Activated CD4-positive, alpha-beta memory T cell treated with anti-CD3 and anti-CD28 coated beads for 36 hours (primary cell): ENCODE measurements at regions of chr10 and their contacts with region 1.

Region 1: GRCh38 chr10:102583435-102584417 is 60.6 kb upstream of the TRIM8 start:
- DNase-seq: peak; percentile 90
- H3K4me3 Mint-ChIP-seq: no peak overlapping the region
- H3K27ac Mint-ChIP-seq: no peak overlapping the region
- H3K4me1 Mint-ChIP-seq: peaks cover 13% of the 10 kb centered on the region
- H3K27me3 Mint-ChIP-seq: no peaks in the 10 kb centered on the region

Region 2: DNA sequence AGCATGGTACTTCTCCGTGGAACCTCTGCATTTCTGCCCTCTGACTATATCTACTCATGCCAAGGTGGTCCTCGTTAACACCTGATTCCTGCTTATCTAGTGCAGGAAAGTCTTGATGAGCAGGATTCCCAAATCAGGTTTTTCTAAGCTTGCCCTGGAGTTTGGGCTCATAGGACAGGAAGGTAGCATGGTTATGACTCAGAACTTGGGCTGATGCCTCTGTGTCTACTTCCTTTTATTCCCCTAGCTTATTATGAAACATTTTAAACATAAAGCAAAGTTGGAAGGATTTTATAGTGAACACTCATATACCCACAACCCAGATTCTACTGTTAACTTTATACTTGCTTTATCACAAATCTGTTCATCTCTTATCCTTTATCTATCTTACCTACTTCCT is 74.3 kb before region 1 on chr10:
- CTCF ChIA-PET with region 1: interaction called, 139 read pairs
- POLR2A ChIA-PET with region 1: interaction called, 10 read pairs
- intact Hi-C with region 1: no loop called
- DNase-seq: no peak
- H3K4me3 Mint-ChIP-seq: no peak overlapping the region
- H3K27ac Mint-ChIP-seq: no peak overlapping the region
- H3K4me1 Mint-ChIP-seq: peaks cover 27% of the 10 kb centered on the region
- H3K27me3 Mint-ChIP-seq: no peaks in the 10 kb centered on the region

Region 3: GRCh38 chr10:102534333-102534732 is 49.4 kb before region 1 on chr10:
- CTCF ChIA-PET with region 1: no interaction called
- POLR2A ChIA-PET with region 1: no interaction called
- intact Hi-C with region 1: no loop called
- DNase-seq: no peak
- H3K4me3 Mint-ChIP-seq: no peak overlapping the region
- H3K27ac Mint-ChIP-seq: no peak overlapping the region
- H3K4me1 Mint-ChIP-seq: peaks cover 5% of the 10 kb centered on the region
- H3K27me3 Mint-ChIP-seq: no peaks in the 10 kb centered on the region

Region 4: DNA sequence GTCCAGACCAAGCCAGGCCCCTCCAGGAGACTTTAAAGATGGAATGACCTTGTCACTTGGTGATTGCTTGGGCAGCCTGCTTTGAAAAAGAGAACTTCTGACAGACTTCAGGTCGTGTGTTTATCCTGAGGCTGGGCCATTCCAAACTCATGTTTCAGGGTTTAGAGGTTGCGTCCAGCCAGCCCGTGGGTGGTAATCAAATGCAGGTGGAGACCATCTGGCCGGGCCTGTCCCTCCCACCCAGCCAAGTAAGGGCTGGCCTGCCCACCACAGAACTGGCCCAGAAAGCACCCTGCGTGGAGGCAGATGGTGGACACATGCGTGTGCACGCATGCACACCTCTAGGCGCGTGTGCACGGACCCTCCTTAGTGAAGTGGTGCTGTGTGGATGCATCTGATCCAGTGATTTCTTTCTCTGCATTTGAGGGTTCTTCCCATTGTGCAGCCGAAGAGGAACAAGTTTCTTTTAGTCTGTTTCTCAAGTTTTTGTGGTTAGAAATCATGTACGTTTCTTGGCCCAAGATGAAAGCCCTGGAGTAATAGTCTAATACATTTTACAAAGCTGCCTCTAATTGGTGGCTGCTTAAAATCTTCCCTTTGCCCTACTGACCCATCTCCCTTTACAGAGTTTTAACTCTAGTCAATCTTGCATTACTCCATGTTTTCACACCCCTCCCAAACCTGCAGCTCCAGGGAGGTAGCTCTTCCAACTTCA is 37.0 kb before region 1 on chr10:
- CTCF ChIA-PET with region 1: interaction called, 14 read pairs
- POLR2A ChIA-PET with region 1: no interaction called
- intact Hi-C with region 1: no loop called
- DNase-seq: no peak
- H3K4me3 Mint-ChIP-seq: no peak overlapping the region
- H3K27ac Mint-ChIP-seq: no peak overlapping the region
- H3K4me1 Mint-ChIP-seq: peaks cover 7% of the 10 kb centered on the region
- H3K27me3 Mint-ChIP-seq: no peaks in the 10 kb centered on the region

Region 5: GRCh38 chr10:102565793-102566192 is 17.9 kb before region 1 on chr10:
- CTCF ChIA-PET with region 1: interaction called, 13 read pairs
- POLR2A ChIA-PET with region 1: no interaction called
- intact Hi-C with region 1: no loop called
- DNase-seq: no peak
- H3K4me3 Mint-ChIP-seq: no peak overlapping the region
- H3K27ac Mint-ChIP-seq: no peak overlapping the region
- H3K4me1 Mint-ChIP-seq: peaks cover 7% of the 10 kb centered on the region
- H3K27me3 Mint-ChIP-seq: no peaks in the 10 kb centered on the region

Region 6: GRCh38 chr10:102599565-102600327 is 16.0 kb after region 1 on chr10:
- CTCF ChIA-PET with region 1: interaction called, 15 read pairs
- POLR2A ChIA-PET with region 1: no interaction called
- intact Hi-C with region 1: no loop called
- DNase-seq: no peak
- H3K4me3 Mint-ChIP-seq: no peak overlapping the region
- H3K27ac Mint-ChIP-seq: no peak overlapping the region
- H3K4me1 Mint-ChIP-seq: peaks cover 7% of the 10 kb centered on the region
- H3K27me3 Mint-ChIP-seq: no peaks in the 10 kb centered on the region

Region 7: GRCh38 chr10:103021897-103022286 is 438.2 kb after region 1 on chr10:
- CTCF ChIA-PET with region 1: no interaction called
- POLR2A ChIA-PET with region 1: no interaction called
- intact Hi-C with region 1: no loop called
- DNase-seq: no peak
- H3K4me3 Mint-ChIP-seq: no peak overlapping the region
- H3K27ac Mint-ChIP-seq: no peak overlapping the region
- H3K4me1 Mint-ChIP-seq: no peaks in the 10 kb centered on the region
- H3K27me3 Mint-ChIP-seq: no peaks in the 10 kb centered on the region

Region 8: GRCh38 chr10:103355906-103356599 is 772.3 kb after region 1 on chr10:
- CTCF ChIA-PET with region 1: no interaction called
- POLR2A ChIA-PET with region 1: no interaction called
- intact Hi-C with region 1: no loop called
- DNase-seq: no peak
- H3K4me3 Mint-ChIP-seq: no peak overlapping the region
- H3K27ac Mint-ChIP-seq: no peak overlapping the region
- H3K4me1 Mint-ChIP-seq: peaks cover 5% of the 10 kb centered on the region
- H3K27me3 Mint-ChIP-seq: no peaks in the 10 kb centered on the region